A549 (cell line): ENCODE measurements at regions of chr7 and their contacts with region 1.

Region 1: DNA sequence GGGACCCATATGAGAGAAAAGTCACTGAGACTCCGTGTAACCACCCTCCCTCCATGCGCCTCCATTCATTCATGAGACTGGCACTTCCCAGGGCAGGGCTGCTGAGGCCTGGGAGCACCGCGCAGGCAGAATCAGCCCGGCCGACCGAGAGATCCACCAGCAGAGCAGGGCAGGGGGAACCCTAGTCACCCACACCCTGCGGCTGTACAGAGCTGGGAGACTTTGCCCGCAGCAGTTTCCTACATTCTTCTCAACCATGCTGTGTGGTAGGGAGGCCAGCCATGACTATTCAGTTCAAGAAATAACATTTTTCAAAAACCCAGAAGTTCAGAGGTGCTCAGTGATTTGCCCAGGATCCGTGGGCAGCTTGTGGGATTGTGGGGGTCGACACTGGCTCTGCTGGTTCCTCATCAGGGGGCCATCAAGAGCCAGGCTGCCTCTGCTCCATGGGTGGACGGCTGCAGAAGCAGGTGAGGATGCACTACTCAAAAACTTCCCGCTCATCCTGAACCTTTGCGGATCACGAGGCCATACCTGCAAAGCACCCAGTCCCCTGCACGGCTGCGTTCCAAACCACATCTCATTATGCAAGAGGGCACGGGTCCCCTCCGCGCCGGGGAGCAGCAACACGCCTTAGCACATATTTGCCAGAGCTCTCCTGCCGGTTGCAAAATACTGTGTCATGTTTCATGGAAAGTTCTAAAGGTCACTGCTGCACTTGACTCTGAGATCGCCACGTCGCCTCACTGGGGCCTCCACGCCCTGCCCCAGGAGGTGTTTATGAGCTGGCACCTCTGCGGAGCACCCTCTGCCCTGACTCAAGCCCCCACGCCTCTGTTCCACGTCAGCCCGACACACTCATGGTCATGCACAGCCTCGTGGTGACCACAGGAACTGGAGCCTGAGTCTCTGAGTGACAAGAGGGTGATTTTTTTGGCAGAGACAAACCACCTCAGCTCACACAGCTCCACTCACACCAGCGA is 132.0 kb downstream of the PRKAG2 start:
- DNase-seq: peak; percentile 92 to 93
- ATAC-seq: peak; percentile 92 to 94
- H3K4me3 ChIP-seq: no peak overlapping the region
- H3K27ac ChIP-seq: peak overlapping the region; percentile 87
- H3K4me1 ChIP-seq: peaks cover 64% of the 10 kb centered on the region
- CTCF ChIP-seq: peak; percentile 51
- EP300 ChIP-seq: peak; percentile 84 to 92; a peak in 3 of 5 replicates
- POLR2A ChIP-seq: no peak
- RAD21 ChIP-seq: peak; percentile 52 to 72

Region 2: DNA sequence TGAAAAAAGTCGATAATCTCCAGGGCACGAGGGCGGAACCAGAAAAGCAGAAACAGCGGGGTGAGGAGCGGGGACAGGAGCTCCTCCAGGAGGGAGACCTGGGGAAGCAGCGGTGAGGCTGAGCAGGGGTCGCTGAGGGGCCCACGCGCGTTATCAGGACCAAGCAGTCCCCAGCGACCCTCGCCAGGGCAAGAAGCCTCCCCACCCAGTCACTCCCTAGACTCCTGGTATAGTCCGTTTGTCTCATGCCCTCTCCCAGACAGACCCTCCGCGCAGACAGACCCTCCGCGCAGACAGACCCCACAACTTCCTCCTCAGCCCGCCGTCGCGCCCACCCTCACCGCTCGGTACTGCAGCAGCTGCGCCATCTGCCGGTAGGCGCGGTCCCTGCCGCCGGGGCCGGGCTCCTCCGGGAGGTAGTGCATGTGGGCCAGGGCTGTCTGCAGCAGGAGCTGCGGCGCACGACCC is 727.0 kb before region 1 on chr7:
- CTCF ChIA-PET with region 1: no interaction called
- POLR2A ChIA-PET with region 1: no interaction called
- DNase-seq: peak; percentile 55 to 71
- ATAC-seq: peak; percentile 72 to 94
- H3K4me3 ChIP-seq: peak overlapping the region; percentile 30; the same call in 2 of the 3 replicates
- H3K27ac ChIP-seq: peak overlapping the region in 1 of 2 experiments; percentile 75; a peak in 2 of 6 replicates
- H3K4me1 ChIP-seq: peaks cover 6% of the 10 kb centered on the region; the same call in 2 of the 3 replicates
- CTCF ChIP-seq: peak; percentile 88
- EP300 ChIP-seq: no peak
- POLR2A ChIP-seq: no peak
- RAD21 ChIP-seq: peak; percentile 58 to 64

Region 3: DNA sequence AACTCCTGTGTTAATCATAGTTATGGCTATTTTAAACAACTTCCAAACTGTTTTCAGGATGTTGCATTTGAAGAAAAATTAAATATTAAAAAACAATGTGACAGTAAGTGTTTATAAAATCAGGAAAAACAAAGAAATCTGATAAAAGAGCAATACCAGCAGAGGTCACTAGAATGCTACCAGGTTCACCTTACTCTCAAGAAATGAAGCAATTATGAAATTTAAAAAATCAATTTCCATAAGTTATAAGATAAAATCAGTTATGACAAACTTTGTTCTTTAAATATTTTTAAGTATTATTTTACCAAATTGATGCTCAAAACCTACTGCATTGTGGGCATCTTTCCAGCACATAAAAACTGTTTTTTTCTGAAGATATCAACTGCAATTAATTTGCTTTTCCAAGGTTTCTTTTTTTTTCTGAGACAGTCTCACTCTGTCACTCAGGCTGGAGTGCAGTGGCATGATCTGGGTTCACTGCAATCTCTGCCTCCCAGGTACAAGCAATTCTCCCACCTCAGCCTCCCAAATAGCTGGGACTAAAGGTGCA is 174.5 kb before region 1 on chr7:
- CTCF ChIA-PET with region 1: interaction called, 19 read pairs
- POLR2A ChIA-PET with region 1: no interaction called
- DNase-seq: peak in 1 of 2 experiments; percentile 25
- ATAC-seq: no peak
- H3K4me3 ChIP-seq: no peak overlapping the region
- H3K27ac ChIP-seq: peak overlapping the region in 1 of 2 experiments; percentile 32; a peak in 1 of 6 replicates
- H3K4me1 ChIP-seq: no peaks in the 10 kb centered on the region; the same call in 2 of the 3 replicates
- CTCF ChIP-seq: peak; percentile 84
- EP300 ChIP-seq: no peak
- POLR2A ChIP-seq: no peak
- RAD21 ChIP-seq: peak; percentile 89 to 91

Region 4: DNA sequence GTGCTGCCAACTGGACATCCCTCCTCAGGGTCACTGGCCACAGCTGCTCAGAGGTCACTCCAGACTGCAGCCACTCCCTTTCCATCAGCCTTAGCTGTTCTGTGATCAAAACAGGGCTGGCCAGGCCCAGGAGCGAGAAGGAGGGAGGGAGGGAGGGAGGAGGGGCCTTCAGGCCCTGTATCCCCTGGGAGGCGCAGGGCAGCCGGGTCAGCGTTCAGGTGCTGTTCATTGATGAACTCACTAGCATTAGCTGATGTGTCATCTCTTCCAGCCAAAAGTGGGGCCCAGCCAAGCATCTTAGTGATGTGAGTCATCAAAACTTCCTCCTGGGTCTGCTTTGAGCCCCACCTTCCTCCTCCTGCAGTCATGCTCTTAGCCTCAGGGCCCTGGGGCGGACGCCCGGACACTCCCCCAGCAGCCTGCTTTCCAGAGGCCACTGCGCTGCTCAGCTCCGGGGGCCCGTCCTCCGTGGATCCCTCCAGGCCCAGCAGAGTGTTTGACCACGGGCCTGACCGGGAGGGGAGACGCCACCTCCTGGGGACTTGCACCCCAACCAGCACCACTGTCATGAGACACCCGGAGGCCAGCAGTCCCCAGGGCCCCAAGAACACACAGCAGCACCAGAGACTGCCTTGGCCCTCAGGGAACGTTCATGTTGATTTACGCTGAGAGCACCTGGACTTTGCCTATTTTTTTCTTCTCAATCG is 17.2 kb before region 1 on chr7:
- CTCF ChIA-PET with region 1: interaction called, 38 read pairs
- POLR2A ChIA-PET with region 1: interaction called, 6 read pairs
- DNase-seq: peak; percentile 91 to 93
- ATAC-seq: peak; percentile 92 to 95
- H3K4me3 ChIP-seq: 0 out of 3 replicates have a peak overlapping the region, but pooled peaks have one; percentile 19
- H3K27ac ChIP-seq: peak overlapping the region; percentile 91 to 94
- H3K4me1 ChIP-seq: peaks cover 34% of the 10 kb centered on the region
- CTCF ChIP-seq: no peak
- EP300 ChIP-seq: peak; percentile 62 to 73; a peak in 3 of 5 replicates
- POLR2A ChIP-seq: no peak
- RAD21 ChIP-seq: peak in 1 of 2 experiments; percentile 55; a peak in 3 of 5 replicates